ENCODE measurements at regions of chr5 and their contacts with region 1.

Region 1: DNA sequence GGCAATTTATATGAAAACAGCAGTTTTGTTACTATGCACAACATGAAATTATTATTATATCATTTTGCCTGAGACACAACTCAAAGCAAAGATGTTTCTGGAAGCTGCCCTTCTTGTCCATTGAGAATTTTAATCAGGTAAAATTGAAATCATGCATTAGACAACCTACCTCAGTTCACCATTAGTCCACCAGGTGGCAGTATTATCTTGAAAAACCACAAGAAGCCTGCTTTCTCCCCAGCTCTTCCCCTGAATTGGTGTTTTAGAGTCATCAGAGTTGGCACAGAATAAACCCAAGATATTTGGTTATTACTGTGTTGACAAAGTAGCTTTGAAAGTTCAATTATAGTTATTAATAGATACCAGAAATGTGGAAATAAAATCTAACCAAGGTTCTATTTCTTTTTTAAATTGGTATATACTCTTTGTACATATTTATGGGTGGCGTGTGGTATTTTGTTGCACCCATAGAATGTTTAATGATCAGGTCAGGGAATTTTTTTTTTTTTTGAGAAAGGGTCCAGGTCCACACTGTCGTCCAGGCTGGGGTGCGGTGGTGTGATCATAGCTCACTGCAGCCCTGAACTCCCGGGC is 25.7 kb downstream of the UTP15 start:
- DNase-seq: no peak
- H3K4me3 Mint-ChIP-seq: no peak overlapping the region
- H3K27ac Mint-ChIP-seq: no peak overlapping the region
- H3K4me1 Mint-ChIP-seq: peaks cover 2% of the 10 kb centered on the region
- H3K27me3 Mint-ChIP-seq: peaks cover 2% of the 10 kb centered on the region

Region 2: DNA sequence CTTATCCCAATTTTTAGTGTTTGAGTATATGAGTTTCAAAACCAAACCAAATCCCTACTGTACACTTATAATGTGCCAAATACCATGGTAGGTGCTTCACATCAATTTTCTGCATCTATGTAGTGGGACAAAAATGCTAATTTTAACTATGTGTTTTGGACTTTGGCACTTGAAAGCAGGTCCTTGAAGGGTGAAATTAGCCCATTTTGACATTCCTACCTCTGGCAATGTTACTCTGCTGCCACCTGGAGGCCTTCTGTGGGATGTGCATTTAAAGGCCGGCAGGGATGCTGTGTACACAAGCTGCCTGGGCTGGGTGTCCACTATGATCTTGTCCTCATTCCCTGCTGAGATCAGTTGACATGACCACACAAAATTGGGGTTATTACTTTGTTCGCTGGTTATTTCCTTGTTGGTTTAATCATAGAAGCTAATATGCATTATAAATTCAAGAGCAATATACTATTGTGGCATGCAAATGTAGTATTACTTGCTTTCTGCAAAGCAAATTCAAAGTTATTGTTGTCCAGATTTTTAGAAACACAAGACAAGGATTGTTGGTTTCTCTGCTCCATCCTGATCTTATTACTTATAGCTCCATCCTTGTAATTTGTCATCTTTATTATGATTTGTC is 201.6 kb after region 1 on chr5:
- intact Hi-C with region 1: loop called (anchors 1 kb)
- DNase-seq: peak; percentile 45
- H3K4me3 Mint-ChIP-seq: no peak overlapping the region
- H3K27ac Mint-ChIP-seq: no peak overlapping the region
- H3K4me1 Mint-ChIP-seq: no peaks in the 10 kb centered on the region
- H3K27me3 Mint-ChIP-seq: peaks cover 15% of the 10 kb centered on the region

Measured in activated T-helper 2 cell treated with anti-CD3 and anti-CD28 coated beads, Interferon-gamma antibody, Interleukin-2, Interleukin-4, amounts not matched to agents 10 μg/mL and 5 μg/mL and 100 μg/mL, durations not matched to agents 14 hours and 24 hours and 36 hours (primary cell).